SK-N-SH (cell line): ENCODE measurements at regions of chr1 and their contacts with region 1.

Region 1: GRCh38 chr1:205658943-205659581 is 21.2 kb downstream of the SLC45A3 start:
- DNase-seq: peak; percentile 93
- H3K4me3 ChIP-seq: no peak overlapping the region; a peak in 1 of 4 replicates
- H3K27ac ChIP-seq: no peak overlapping the region
- H3K4me1 ChIP-seq: peaks cover 0 to 4% of the 10 kb centered on the region in 2 experiments; a peak in 1 of 4 replicates
- H3K27me3 ChIP-seq: no peaks in the 10 kb centered on the region
- CTCF ChIP-seq: peak; percentile 88
- EP300 ChIP-seq: no peak
- RAD21 ChIP-seq: peak; percentile 91

Region 2: GRCh38 chr1:205396967-205397616 is 262.0 kb before region 1 on chr1:
- CTCF ChIA-PET with region 1: interaction called, 12 read pairs
- POLR2A ChIA-PET with region 1: no interaction called
- DNase-seq: peak; percentile 75
- H3K4me3 ChIP-seq: peak overlapping the region in 1 of 2 experiments; percentile 38; a peak in 1 of 4 replicates
- H3K27ac ChIP-seq: no peak overlapping the region
- H3K4me1 ChIP-seq: no peaks in the 10 kb centered on the region
- H3K27me3 ChIP-seq: no peaks in the 10 kb centered on the region; the same call in 1 of the 2 replicates
- CTCF ChIP-seq: peak; percentile 65
- EP300 ChIP-seq: no peak
- RAD21 ChIP-seq: peak; percentile 94

Region 3: DNA sequence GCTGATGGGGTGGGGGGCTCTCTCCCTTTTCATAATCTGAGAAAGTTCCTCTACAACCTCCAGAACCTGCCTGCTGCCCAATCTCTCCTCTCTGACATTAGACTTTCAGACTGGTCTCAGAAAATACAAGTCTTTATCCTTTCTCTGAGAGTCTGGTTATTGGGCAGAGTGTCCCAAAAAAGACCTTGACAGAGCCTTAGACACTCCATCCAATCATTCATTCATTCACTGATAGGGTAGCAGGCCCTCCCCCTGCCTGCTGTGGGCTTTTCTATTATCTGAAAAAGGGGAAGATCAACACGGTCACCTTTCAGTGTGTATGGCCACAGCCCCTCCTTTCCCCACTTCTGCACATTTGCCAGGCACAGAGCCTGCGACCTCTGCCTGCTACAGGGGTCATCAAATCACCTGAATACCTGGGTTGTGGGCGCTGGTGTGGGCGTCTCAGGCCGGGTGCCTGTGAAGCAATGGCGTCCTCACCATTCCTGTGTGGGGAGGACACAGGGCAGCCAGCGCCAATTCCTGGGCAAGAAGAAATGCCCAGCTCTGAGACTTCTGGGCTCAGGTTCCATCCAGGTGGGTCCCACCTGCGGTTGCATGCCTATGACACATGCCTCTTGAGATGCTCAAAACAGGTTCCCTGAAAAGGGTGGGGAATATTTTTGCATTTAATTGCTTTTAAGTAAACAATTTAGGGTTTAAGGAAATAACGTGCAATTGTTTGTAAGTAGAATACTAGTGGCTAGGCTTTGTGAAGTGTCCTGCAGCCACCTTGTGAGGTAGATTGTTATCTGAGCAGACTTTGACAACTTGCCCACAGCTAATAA is 80.1 kb before region 1 on chr1:
- CTCF ChIA-PET with region 1: interaction called, 26 read pairs
- POLR2A ChIA-PET with region 1: no interaction called
- DNase-seq: no peak
- H3K4me3 ChIP-seq: no peak overlapping the region
- H3K27ac ChIP-seq: no peak overlapping the region
- H3K4me1 ChIP-seq: peaks cover 0 to 21% of the 10 kb centered on the region in 2 experiments; a peak in 2 of 4 replicates
- H3K27me3 ChIP-seq: peaks cover 10% of the 10 kb centered on the region; the same call in 1 of the 2 replicates
- CTCF ChIP-seq: no peak
- EP300 ChIP-seq: no peak
- RAD21 ChIP-seq: no peak

Region 4: GRCh38 chr1:205631727-205632373 is 27.2 kb before region 1 on chr1 and contains the start of gene ELK4:
- CTCF ChIA-PET with region 1: interaction called, 94 read pairs
- POLR2A ChIA-PET with region 1: interaction called, 5 read pairs
- DNase-seq: peak; percentile 98
- H3K4me3 ChIP-seq: peak within 1 kb of the TSS; percentile 77 to 83
- H3K27ac ChIP-seq: peak within 1 kb of the TSS; percentile 95
- H3K4me1 ChIP-seq: peaks cover 0 to 9% of the 10 kb centered on the region in 2 experiments; a peak in 2 of 4 replicates
- H3K27me3 ChIP-seq: no peaks in the 10 kb centered on the region
- CTCF ChIP-seq: peak; percentile 73
- EP300 ChIP-seq: peak in 1 of 2 experiments; percentile 36; a peak in 1 of 4 replicates
- RAD21 ChIP-seq: peak; percentile 77
- polyA plus RNA-seq, gene ELK4: 2.6 and 3.8 TPM in 2 replicates

Region 5: DNA sequence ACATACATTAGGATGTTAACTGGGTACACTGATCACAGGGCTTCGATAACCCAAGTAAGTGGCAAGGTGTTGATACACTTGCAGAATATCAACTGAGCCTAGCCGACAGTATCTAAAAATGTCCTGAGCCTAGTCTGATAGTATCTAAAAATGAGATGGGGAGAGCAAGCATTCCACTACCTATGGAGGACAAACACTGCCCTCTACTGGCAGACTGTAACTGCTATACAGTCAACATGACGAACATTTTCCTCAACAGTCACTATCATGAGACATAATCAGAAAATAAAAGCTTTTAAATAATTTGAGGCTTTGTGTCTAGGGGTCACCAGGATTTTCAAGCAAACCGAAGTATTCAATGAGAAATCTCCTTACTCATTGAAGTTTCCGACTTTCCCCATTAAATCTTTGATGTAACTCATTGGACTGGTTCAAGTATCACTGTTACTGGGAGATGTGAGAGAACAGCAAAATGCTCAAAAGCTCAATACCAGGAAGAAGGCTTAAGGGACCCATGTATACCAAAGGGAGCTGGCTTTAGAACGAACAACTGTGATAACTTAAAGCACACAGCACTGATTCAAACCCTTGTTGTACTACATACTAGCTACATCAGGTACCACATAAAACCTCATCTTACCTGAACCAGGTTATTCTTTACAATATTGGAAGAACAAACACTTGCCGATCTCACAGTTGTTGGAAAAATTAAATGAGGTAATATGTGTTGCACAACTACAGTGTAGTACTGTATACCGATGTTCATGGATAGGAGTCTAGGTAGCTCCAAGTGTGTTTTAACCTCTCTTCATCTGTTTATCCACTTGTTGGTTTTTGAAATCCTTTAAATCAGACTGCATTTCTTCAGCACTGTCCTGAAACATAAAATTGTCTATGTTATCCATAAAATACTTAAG is 52.3 kb after region 1 on chr1:
- CTCF ChIA-PET with region 1: interaction called, 367 read pairs
- POLR2A ChIA-PET with region 1: interaction called, 3 read pairs
- DNase-seq: peak; percentile 70
- H3K4me3 ChIP-seq: no peak overlapping the region; a peak in 1 of 4 replicates
- H3K27ac ChIP-seq: peak overlapping the region; percentile 53 to 55
- H3K4me1 ChIP-seq: no peaks in the 10 kb centered on the region; a peak in 1 of 4 replicates
- H3K27me3 ChIP-seq: no peaks in the 10 kb centered on the region
- CTCF ChIP-seq: peak; percentile 96
- EP300 ChIP-seq: no peak
- RAD21 ChIP-seq: peak; percentile 81

Region 6: DNA sequence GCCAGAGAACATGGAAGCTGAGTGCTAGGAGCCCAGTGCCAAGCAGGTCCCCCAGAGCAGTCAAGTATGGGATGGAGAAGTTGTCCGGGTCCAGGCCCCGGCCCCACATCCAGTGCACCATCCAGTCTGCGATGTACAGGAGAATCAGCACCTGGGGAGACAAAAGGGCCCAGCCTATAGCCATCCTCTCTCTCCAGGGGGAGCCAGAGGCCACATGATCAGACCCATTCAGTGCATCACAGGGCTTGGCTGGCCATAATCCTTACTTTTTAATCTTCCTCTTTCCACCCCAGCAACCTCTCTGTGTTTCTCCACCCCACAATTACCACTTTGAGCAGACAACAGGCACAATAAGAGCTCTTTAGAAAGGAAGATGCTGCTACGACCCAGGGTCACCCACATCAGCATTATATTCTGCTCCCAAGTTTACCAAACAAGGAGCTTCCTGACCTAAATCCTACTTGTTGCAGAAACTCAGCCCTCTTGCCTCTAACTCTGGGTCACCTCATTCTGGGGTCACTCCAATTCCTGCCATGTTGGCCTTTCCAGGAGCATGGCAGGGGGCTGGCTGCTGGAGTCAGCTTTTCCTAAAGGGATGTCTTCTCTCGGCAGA is 132.6 kb after region 1 on chr1:
- CTCF ChIA-PET with region 1: interaction called, 16 read pairs
- POLR2A ChIA-PET with region 1: no interaction called
- DNase-seq: peak; percentile 82
- H3K4me3 ChIP-seq: no peak overlapping the region
- H3K27ac ChIP-seq: no peak overlapping the region; a peak in 1 of 4 replicates
- H3K4me1 ChIP-seq: peaks cover 0 to 3% of the 10 kb centered on the region in 2 experiments; a peak in 1 of 4 replicates
- H3K27me3 ChIP-seq: no peaks in the 10 kb centered on the region
- CTCF ChIP-seq: peak; percentile 86
- EP300 ChIP-seq: no peak
- RAD21 ChIP-seq: peak; percentile 94